ENCODE measurements at regions of chr16 and their contacts with region 1.

Region 1: DNA sequence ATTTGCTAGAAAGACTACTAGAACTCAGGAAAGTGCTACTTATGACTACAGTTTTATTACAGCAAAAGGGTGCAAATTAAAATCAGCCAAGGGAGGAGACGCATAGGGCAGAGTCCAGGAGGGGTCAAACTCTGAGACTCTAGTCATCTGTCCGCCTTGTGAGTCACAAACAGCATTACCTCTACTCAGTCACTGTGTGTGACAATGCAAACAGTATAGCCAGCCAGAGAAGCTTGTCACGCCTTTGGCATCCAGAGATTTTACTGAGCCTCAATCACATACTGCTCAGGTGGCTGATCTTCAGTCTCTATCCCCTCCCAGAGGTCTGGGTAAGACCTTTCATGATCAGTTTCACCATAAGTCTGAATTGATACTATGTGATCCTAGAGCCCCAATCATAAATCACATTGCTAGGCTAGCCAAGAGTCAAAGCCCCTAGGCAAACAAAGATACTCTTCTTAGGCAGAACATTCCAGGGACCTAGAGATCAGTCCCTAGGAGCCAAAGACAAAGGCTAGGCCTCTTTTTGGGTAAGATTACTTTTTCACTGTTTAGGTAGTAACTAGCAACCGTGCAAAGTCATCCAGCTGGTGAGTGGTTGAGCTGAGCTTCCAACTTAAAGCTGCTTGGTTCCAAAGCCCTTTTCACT is 48.8 kb upstream of the CLEC19A start:
- DNase-seq: peak; percentile 44 to 89
- H3K4me3 ChIP-seq: no peak overlapping the region
- H3K27ac ChIP-seq: peak overlapping the region; percentile 75
- H3K4me1 ChIP-seq: peaks cover 21% of the 10 kb centered on the region
- H3K27me3 ChIP-seq: no peaks in the 10 kb centered on the region
- CTCF ChIP-seq: no peak

Region 2: DNA sequence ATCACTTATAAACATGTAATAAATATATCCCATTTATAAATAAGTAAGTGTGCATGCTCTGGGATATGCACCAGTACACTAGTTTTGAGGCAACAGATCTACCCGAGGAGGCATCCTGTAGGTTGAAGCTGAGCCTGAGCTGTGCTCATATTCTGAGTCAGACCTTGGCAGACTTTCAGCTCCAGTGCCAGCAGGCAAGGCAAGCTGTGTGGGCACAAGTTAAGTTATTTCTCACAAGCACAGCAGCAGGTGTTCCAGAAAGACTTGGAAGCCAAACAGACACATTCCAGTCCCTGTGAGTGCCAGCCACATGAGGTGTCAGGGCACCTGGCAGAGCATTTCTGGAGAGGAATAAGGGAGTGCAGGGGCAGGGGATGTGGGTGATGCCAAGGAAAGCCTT is 47.5 kb after region 1 on chr16:
- CTCF ChIA-PET with region 1: no interaction called
- POLR2A ChIA-PET with region 1: no interaction called
- intact Hi-C with region 1: loop called (anchors 5 kb)
- DNase-seq: peak; percentile 90 to 95
- H3K4me3 ChIP-seq: no peak overlapping the region
- H3K27ac ChIP-seq: peak overlapping the region; percentile 76
- H3K4me1 ChIP-seq: peaks cover 23% of the 10 kb centered on the region
- H3K27me3 ChIP-seq: no peaks in the 10 kb centered on the region
- CTCF ChIP-seq: no peak

Region 3: DNA sequence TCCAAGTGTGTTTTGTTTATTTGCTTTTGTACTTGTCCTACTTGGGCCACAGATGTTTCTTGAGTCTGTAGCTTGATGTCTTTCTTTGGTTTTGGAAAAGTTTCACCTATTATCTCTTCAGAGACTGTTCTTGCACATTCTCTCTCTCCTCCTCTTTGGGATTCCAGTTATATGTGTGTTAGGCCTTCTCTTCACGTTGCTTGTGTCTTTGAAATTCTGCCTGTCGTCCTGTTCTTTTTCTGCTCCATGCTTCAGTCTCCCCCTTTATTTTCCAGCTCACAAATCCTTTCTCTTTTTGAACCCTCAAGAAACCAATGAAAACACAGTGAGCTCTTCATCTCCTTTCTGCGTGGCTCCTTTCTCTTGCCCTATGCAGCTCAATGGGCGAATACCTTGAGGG is 326.7 kb after region 1 on chr16:
- CTCF ChIA-PET with region 1: no interaction called
- POLR2A ChIA-PET with region 1: no interaction called
- intact Hi-C with region 1: no loop called
- DNase-seq: no peak
- H3K4me3 ChIP-seq: no peak overlapping the region
- H3K27ac ChIP-seq: no peak overlapping the region
- H3K4me1 ChIP-seq: no peaks in the 10 kb centered on the region
- H3K27me3 ChIP-seq: no peaks in the 10 kb centered on the region
- CTCF ChIP-seq: no peak

Region 4: DNA sequence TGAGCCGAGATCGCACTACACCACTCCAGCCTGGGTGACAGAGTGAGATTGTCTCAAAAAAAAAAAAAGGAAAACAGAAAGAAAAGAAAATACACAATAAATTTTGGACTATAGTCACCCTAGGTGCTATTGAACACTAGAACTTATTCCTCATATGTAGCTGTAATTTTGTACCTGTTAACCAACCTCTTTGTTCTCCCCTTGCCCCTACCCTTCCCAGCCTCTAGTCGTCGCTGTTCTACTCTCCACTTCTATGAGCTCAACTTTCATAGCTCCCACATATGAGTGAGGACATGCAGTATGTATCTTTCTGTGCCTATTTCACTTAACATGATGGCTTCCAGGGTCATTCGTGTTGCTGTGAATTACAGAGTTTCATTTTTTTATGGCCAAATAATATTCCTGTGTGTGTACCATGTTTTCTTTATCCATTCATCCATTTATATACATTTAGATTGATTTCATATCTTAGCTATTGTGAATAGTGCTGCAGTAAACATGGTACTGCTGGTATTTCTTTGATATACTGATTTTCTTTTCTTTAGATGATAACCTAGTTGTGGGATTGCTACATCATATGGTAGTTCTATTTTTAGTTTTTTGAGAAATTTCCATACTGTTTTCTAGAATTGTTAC is 347.1 kb after region 1 on chr16:
- CTCF ChIA-PET with region 1: no interaction called
- POLR2A ChIA-PET with region 1: no interaction called
- intact Hi-C with region 1: no loop called
- DNase-seq: peak in 1 of 2 experiments; percentile 46
- H3K4me3 ChIP-seq: no peak overlapping the region
- H3K27ac ChIP-seq: no peak overlapping the region
- H3K4me1 ChIP-seq: no peaks in the 10 kb centered on the region
- H3K27me3 ChIP-seq: no peaks in the 10 kb centered on the region
- CTCF ChIP-seq: peak; percentile 91

Measured in PC-9 (cell line).